ENCODE measurements at regions of chr2 and their contacts with region 1.

Region 1: DNA sequence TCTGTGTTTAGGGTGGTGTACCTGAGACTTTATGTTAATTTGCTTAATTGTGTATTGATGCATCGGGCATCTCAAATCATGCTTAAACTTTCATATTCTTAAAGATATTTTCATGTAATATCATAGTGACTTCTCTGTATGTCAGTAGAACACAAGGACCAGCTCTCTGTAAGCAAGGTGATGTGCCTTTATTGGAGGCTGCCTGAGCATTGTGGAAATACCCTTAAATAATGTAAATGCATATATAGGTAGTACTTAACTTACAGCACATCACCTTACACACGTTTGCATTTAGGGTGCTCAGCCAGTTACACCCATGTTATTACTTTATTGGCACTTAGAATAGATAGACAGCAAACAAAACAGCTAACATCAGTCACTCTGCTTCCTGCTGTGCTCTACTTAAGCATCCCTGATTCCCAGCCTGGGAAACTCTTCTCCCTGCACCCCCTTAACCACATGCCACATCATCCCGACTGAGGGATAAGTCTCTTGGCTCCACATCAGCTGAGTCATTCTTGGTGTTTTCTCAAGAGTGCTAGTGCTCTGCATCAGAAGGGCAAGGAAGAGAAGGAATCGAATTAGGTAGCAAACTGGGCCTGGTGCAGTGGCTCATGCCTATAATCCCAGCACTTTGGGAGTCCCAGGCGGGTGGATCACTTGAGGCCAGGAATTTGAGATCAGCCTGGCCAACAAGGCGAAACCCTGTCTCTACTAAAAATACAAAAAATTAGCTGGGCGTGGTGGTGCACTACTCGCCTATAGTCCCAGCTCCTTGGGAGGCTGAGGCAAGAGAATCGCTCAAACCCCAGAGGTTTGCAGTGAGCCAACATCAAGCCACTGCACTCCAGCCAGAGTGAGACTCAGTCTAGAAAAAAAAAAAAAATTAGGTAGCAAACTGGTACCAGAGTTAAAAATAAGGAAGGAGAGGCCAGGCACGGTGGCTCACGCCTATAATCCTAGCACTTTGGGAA is 108.7 kb downstream of the MAP3K20 start:
- DNase-seq: no peak
- H3K4me3 ChIP-seq: no peak overlapping the region
- H3K27ac ChIP-seq: peak overlapping the region; percentile 74 to 83 (median 80)
- H3K4me1 ChIP-seq: peaks cover 40 to 71% (median 65%) of the 10 kb centered on the region in 4 donors
- H3K27me3 ChIP-seq: no peaks in the 10 kb centered on the region
- CTCF ChIP-seq: no peak
- EP300 ChIP-seq: no peak
- POLR2A ChIP-seq: no peak

Region 2: DNA sequence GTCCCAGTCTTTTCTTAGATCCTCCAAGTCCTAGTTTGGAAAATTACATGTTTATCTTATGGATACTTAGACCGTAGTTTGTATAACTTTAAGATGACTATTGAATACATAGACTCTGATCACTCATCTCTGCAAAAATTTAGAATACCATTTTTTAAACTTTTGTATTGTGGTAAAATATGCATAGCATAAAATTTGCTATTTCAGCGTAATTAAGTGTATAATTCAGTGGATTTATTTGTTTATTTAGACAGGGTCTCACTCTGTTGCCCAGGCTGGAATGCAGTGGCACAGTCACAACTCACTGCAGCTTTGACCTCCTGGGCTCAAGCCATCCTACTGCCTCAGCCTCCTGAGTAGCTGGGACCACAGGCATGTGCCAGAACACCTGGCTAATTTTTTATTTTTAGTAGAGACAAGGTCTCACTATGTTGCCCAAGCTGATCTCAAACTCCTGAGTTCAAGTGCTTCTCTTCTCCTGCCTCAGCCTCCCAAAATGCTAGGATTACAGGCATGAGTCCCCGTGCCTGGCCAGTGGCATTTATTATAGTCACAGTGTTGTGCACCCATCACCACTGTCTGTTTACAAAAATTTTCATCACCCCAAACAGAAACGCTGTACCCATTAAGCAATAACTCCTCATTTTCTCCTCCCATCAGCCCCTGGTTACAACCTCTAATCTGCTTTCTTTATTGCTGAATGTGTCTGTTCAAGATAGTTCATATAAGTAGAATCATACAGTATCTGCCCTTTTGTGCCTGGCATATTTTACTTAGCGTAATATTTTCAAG is 18.7 kb before region 1 on chr2:
- intact Hi-C with region 1: loop called (anchors 2 kb)
- DNase-seq: no peak
- H3K4me3 ChIP-seq: no peak overlapping the region
- H3K27ac ChIP-seq: no peak overlapping the region
- H3K4me1 ChIP-seq: peaks cover 10 to 48% (median 43%) of the 10 kb centered on the region in 4 donors
- H3K27me3 ChIP-seq: no peaks in the 10 kb centered on the region
- CTCF ChIP-seq: no peak
- EP300 ChIP-seq: no peak
- POLR2A ChIP-seq: no peak

Measured in esophagus muscularis mucosa (tissue), 4 donors.